Activated CD4-positive, alpha-beta T cell treated with anti-CD3 and anti-CD28 coated beads for 36 hours (primary cell): ENCODE measurements at regions of chr1 and their contacts with region 1.

Region 1: DNA sequence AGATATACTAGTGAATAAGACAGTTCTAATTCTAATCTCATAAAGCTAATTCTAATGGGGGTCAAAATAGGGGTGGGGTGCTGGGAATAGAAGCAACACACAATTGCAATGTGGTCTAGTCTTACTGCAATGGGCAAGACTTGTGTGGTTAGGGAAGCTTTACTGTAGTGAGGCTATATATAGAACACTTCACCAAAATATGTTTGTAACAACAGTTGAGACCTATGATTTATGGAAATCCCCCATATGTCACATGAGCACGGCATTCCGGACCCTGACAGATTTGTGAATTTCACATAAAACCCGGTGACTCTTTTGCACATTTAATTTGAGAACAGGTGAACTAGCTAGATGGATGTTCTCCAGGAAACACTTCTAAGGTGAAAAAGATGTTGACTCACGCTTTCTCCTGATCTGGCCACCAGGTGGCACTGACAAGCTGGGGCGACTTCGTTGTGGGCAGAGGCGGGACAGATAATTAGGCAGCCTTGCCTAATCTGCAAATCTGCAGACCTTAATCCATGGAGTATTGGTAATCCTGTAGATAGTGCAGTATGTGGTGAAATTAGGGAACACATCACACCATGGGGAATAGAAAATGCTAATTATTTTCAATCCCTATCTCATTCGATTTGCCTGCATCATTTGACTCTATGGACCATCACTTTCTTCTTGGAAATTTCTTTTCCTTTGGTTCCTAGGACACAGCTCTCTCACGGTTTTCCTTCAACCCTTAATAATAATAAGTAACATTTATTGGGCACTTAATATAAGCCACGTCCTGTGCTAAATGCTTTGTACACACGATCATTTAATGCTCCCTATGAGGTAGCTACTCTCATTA is 37.7 kb downstream of the KIAA0040 start:
- DNase-seq: peak; percentile 87
- ATAC-seq: peak; percentile 43
- H3K4me3 Mint-ChIP-seq: no peak overlapping the region
- H3K27ac Mint-ChIP-seq: no peak overlapping the region
- H3K4me1 Mint-ChIP-seq: peaks cover 23% of the 10 kb centered on the region
- H3K27me3 Mint-ChIP-seq: peaks cover 28% of the 10 kb centered on the region

Region 2: GRCh38 chr1:174276087-174276486 is 878.8 kb before region 1 on chr1:
- CTCF ChIA-PET with region 1: no interaction called
- POLR2A ChIA-PET with region 1: no interaction called
- intact Hi-C with region 1: no loop called
- DNase-seq: no peak
- ATAC-seq: no peak
- H3K4me3 Mint-ChIP-seq: no peak overlapping the region
- H3K27ac Mint-ChIP-seq: no peak overlapping the region
- H3K4me1 Mint-ChIP-seq: no peaks in the 10 kb centered on the region
- H3K27me3 Mint-ChIP-seq: no peaks in the 10 kb centered on the region

Region 3: GRCh38 chr1:175137369-175137768 is 17.5 kb before region 1 on chr1:
- CTCF ChIA-PET with region 1: interaction called, 27 read pairs
- POLR2A ChIA-PET with region 1: no interaction called
- intact Hi-C with region 1: no loop called
- DNase-seq: no peak
- ATAC-seq: no peak
- H3K4me3 Mint-ChIP-seq: no peak overlapping the region
- H3K27ac Mint-ChIP-seq: no peak overlapping the region
- H3K4me1 Mint-ChIP-seq: peaks cover 8% of the 10 kb centered on the region
- H3K27me3 Mint-ChIP-seq: peaks cover 12% of the 10 kb centered on the region

Region 4: GRCh38 chr1:175192630-175193526 is 38.0 kb after region 1 on chr1 and contains the start of gene KIAA0040:
- CTCF ChIA-PET with region 1: interaction called, 29 read pairs
- POLR2A ChIA-PET with region 1: no interaction called
- intact Hi-C with region 1: loop called (anchors 2 kb)
- DNase-seq: peak; percentile 81
- ATAC-seq: peak; percentile 65
- H3K4me3 Mint-ChIP-seq: peak within 1 kb of the TSS; percentile 99
- H3K27ac Mint-ChIP-seq: peak within 1 kb of the TSS; percentile 93
- H3K4me1 Mint-ChIP-seq: peaks cover 47% of the 10 kb centered on the region
- H3K27me3 Mint-ChIP-seq: no peaks in the 10 kb centered on the region
- total RNA-seq, gene KIAA0040: 25.4 to 26.1 TPM

Region 5: GRCh38 chr1:175307160-175307559 is 152.3 kb after region 1 on chr1:
- CTCF ChIA-PET with region 1: interaction called, 22 read pairs
- POLR2A ChIA-PET with region 1: no interaction called
- intact Hi-C with region 1: no loop called
- DNase-seq: no peak
- ATAC-seq: no peak
- H3K4me3 Mint-ChIP-seq: no peak overlapping the region
- H3K27ac Mint-ChIP-seq: no peak overlapping the region
- H3K4me1 Mint-ChIP-seq: no peaks in the 10 kb centered on the region
- H3K27me3 Mint-ChIP-seq: no peaks in the 10 kb centered on the region

Region 6: DNA sequence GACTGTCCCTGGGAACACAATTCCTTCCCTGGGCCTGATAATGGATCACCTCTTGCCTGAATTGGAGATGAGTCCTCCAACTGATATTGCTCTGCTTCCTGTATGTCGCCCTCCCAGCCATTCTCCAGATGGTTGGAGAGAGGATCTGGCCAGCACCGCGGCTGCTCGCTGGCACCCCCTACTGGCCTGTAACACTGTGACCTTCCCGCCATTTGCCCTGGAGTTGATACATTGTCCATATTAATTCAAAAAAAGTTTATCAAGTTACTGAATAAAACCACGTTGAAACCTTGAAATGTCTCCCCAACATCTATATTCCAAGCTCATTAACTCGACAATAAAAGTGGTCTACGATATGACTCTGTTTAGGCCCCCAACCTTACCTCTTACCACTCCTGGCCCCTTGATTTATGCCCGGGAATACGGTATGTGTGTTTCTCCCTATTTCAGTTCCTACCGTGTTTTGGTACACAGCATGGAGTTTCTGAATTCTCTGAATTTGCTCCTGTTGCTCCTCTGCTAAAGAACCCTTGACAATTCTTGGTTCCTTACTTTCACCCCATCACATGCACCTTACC is 279.5 kb after region 1 on chr1:
- CTCF ChIA-PET with region 1: interaction called, 3 read pairs
- POLR2A ChIA-PET with region 1: no interaction called
- intact Hi-C with region 1: loop called in 1 of 2 experiments (anchors 2 kb)
- DNase-seq: peak; percentile 39
- ATAC-seq: no peak
- H3K4me3 Mint-ChIP-seq: no peak overlapping the region
- H3K27ac Mint-ChIP-seq: no peak overlapping the region
- H3K4me1 Mint-ChIP-seq: no peaks in the 10 kb centered on the region
- H3K27me3 Mint-ChIP-seq: peaks cover 32% of the 10 kb centered on the region

Region 7: DNA sequence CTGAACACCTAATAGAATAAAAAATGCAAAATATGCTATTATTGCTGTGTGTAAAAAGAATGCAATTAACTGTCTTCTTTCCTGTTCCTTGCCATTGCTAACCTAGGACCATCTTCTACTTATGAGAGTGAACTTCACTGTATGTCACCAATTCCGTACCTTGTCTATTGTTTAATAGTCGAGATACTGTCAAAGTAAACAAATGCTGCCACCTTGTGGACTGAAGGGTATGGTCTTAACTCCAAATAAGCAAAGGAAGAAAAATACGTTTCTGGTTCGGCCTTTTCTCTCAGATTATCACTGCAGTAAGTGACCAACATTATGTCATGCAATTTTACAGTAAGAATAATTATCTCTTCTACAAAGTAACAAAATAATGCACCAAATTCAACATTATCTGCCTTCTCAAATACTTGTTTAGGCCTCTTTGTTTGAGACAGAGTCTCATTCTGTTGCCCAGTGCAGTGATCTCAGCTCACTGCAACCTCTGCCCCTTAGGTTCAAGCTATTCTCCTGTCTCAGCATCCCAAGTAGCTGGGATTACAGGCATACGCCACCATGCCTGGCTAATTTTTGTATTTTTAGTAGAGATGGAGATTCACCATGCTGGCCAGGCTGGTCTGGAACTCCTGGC is 918.8 kb after region 1 on chr1:
- CTCF ChIA-PET with region 1: interaction called, 4 read pairs
- POLR2A ChIA-PET with region 1: no interaction called
- intact Hi-C with region 1: loop called in 1 of 2 experiments (anchors 2 kb)
- DNase-seq: peak; percentile 39
- ATAC-seq: peak; percentile 61
- H3K4me3 Mint-ChIP-seq: no peak overlapping the region
- H3K27ac Mint-ChIP-seq: no peak overlapping the region
- H3K4me1 Mint-ChIP-seq: peaks cover 3% of the 10 kb centered on the region
- H3K27me3 Mint-ChIP-seq: no peaks in the 10 kb centered on the region